K562 (cell line): ENCODE measurements at regions of chrX and their contacts with region 1.

Region 1: GRCh38 chrX:123450221-123450620 is 266.1 kb downstream of the GRIA3 start:
- DNase-seq: peak in 3 of 4 experiments; percentile 8 to 23 (median 14)
- ATAC-seq: peak; percentile 71
- H3K4me3 ChIP-seq: no peak overlapping the region
- H3K27ac ChIP-seq: no peak overlapping the region
- H3K4me1 ChIP-seq: peaks cover 0 to 9% of the 10 kb centered on the region in 2 experiments; a peak in 2 of 5 replicates
- H3K27me3 ChIP-seq: no peaks in the 10 kb centered on the region
- CTCF ChIP-seq: peak; percentile 36 to 62 (median 61); a peak in 5 of 6 replicates
- EP300 ChIP-seq: no peak
- POLR2A ChIP-seq: no peak
- RAD21 ChIP-seq: peak; percentile 57 to 70

Region 2: DNA sequence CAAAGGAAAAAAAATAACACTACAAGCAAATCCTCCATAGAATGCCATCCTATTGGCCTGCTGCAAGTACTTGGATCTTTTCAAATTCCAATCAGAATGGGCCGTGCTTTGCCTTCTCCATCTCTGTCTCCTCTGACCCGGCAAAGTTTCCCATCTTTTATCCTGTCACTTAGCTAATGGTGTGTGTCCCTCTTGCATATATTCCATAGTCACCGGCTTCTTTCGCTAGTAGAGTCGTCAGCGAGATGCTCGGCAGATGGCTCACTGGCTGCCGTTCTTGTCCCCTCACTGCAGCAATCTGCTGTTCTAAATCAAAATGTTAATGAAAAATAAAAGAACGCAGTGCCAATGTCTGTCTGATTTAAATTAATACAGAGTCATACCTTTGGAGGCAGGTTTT is 244.0 kb before region 1 on chrX:
- CTCF ChIA-PET with region 1: no interaction called
- POLR2A ChIA-PET with region 1: no interaction called
- in situ Hi-C with region 1: no loop called
- intact Hi-C with region 1: no loop called
- DNase-seq: no peak
- ATAC-seq: no peak
- H3K4me3 ChIP-seq: no peak overlapping the region
- H3K27ac ChIP-seq: no peak overlapping the region
- H3K4me1 ChIP-seq: no peaks in the 10 kb centered on the region
- H3K27me3 ChIP-seq: no peaks in the 10 kb centered on the region
- CTCF ChIP-seq: no peak
- EP300 ChIP-seq: no peak
- POLR2A ChIP-seq: no peak
- RAD21 ChIP-seq: no peak

Region 3: DNA sequence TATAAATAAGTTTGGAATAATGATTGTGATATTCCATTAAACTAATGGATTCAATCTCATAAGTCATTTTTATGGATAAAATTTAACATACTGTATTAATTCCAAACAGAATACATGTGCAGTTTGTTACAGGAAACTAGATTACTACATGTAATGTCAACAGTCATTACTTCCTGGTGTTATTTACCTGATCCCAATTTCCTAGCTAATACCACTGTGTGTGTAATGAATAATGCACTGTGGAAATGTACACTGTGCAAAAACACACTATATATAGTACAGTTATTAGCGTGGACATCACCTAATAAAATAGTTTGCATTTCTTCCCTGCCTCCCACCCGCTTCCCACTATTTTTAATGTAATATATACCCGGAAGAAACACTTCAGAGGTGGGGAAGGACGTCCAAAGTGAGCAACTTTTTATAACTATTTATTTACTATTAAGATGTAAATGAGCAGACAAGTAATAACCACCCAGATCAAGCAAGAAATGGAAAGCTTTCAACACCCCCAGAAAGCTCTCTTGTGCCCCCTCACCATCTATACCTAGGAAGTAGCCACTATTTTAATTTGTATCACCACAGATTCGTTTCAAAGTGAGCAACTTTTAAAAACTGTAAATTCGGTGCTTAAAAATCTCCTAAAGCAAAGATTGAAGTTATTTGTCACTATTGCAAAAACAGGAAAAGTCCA is 63.5 kb after region 1 on chrX:
- CTCF ChIA-PET with region 1: no interaction called
- POLR2A ChIA-PET with region 1: no interaction called
- in situ Hi-C with region 1: no loop called
- intact Hi-C with region 1: loop called (anchors 1 kb)
- DNase-seq: peak in 2 of 4 experiments; percentile 5 to 11
- ATAC-seq: peak; percentile 66
- H3K4me3 ChIP-seq: peak overlapping the region; percentile 42
- H3K27ac ChIP-seq: peak overlapping the region; percentile 20; the same call in 2 of the 3 replicates
- H3K4me1 ChIP-seq: peaks cover 0 to 2% of the 10 kb centered on the region in 2 experiments; a peak in 1 of 5 replicates
- H3K27me3 ChIP-seq: no peaks in the 10 kb centered on the region
- CTCF ChIP-seq: no peak
- EP300 ChIP-seq: no peak
- POLR2A ChIP-seq: no peak
- RAD21 ChIP-seq: no peak

Region 4: GRCh38 chrX:123545009-123545408 is 94.8 kb after region 1 on chrX:
- CTCF ChIA-PET with region 1: no interaction called
- POLR2A ChIA-PET with region 1: no interaction called
- in situ Hi-C with region 1: no loop called
- intact Hi-C with region 1: loop called (anchors 10 kb)
- DNase-seq: no peak
- ATAC-seq: no peak; the same call in 2 of the 3 replicates
- H3K4me3 ChIP-seq: no peak overlapping the region
- H3K27ac ChIP-seq: no peak overlapping the region
- H3K4me1 ChIP-seq: peaks cover 0 to 2% of the 10 kb centered on the region in 2 experiments; a peak in 1 of 5 replicates
- H3K27me3 ChIP-seq: no peaks in the 10 kb centered on the region
- CTCF ChIP-seq: no peak
- EP300 ChIP-seq: no peak
- POLR2A ChIP-seq: no peak
- RAD21 ChIP-seq: 0 out of 4 replicates have a peak, but pooled peaks of 1 of the 2 experiments have one; percentile 11

Region 5: DNA sequence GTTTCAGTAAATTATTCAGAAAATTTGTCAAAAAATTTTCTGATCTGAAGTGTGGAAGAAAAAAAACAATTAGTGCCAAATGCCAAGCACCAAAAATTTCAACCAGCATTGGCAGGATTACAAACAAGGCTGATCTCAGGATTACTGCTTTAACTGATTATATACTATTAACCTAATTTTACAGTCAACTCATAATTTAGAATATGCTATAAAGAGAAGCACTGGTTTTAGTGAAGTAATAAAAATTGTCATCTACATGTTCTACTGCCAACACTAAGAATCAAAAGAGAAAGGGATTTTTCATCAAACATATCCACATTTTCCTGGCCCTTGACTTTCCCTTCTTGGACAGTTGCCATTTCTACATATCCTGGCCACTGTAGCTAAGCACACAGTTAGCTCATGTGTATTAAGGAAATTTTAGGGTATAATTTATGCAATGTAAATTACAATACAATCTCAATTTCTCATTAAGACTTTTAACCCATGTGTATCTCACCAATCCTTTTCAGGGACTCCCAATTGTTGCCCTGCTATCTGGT is 248.8 kb after region 1 on chrX:
- CTCF ChIA-PET with region 1: no interaction called
- POLR2A ChIA-PET with region 1: no interaction called
- in situ Hi-C with region 1: no loop called
- intact Hi-C with region 1: no loop called
- DNase-seq: no peak
- ATAC-seq: no peak
- H3K4me3 ChIP-seq: no peak overlapping the region
- H3K27ac ChIP-seq: no peak overlapping the region
- H3K4me1 ChIP-seq: no peaks in the 10 kb centered on the region; a peak in 2 of 5 replicates
- H3K27me3 ChIP-seq: no peaks in the 10 kb centered on the region
- CTCF ChIP-seq: no peak
- EP300 ChIP-seq: no peak
- POLR2A ChIP-seq: no peak
- RAD21 ChIP-seq: no peak

Region 6: DNA sequence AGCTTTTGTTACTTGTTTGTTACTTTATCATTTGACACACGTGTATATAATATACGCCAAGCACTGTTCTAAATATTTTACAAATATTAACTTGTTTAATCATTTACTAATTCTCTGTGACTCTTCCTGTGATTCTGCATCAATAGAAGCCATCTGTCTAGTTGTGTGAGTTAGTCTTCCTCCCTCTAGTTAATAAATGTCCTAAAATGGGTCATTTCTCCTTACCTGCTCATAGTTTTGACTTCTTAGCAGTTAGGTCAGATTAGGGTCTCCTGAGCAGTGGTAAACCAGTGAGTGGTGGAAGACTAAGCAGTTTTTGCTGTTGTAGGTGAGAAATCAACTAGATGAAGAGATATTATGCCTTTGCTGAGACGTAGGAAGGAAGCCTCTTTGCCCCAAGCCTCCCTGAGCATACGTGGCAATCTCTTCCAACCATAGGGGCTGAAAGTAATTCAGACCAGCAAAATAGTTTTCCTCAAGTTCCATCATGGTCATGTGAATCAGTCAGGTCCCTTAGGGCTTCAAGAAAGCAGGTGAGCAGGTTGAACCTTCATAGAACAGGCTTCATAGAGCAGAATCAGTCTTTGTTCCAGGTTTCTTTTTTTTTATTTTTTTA is 321.3 kb after region 1 on chrX:
- CTCF ChIA-PET with region 1: no interaction called
- POLR2A ChIA-PET with region 1: no interaction called
- in situ Hi-C with region 1: no loop called
- intact Hi-C with region 1: loop called (anchors 5 kb)
- DNase-seq: no peak
- ATAC-seq: no peak
- H3K4me3 ChIP-seq: no peak overlapping the region
- H3K27ac ChIP-seq: no peak overlapping the region
- H3K4me1 ChIP-seq: no peaks in the 10 kb centered on the region; a peak in 1 of 5 replicates
- H3K27me3 ChIP-seq: no peaks in the 10 kb centered on the region
- CTCF ChIP-seq: no peak
- EP300 ChIP-seq: no peak
- POLR2A ChIP-seq: no peak
- RAD21 ChIP-seq: no peak